ENCODE measurements at regions of chr6 and their contacts with region 1.

Region 1: DNA sequence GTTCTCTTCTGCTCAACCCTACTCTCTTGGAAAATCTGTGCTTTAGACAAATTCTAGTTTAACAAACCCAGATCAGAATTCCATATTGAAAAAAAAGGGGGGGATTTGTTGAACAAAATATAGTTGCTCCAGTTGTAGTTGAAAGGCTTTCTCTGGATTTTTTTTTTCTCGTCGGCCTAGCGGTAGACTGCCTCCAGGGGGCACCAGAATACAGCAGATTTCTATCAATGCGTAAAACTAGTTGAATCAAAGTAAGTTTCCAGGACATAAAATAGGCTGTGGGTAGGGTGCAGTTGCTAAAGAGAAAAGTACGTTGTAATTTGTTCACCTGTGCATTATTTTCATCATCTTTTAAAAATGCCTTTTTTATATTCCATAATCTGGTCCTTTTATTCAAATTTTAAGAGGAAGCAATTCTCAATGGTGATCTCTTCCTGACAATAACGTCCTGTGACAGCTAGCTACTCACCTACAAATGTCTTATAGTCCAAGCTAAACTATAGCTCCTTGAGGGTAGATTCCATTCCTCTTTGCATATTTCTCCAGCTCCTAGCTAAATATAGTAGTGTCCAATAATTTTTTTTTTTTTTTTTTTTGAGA is 105.4 kb downstream of the PERP start:
- DNase-seq: peak; percentile 53 to 63 (median 55)
- H3K4me3 ChIP-seq: no peak overlapping the region
- H3K4me3 Mint-ChIP-seq: no peak overlapping the region
- H3K27ac ChIP-seq: no peak overlapping the region
- H3K27ac Mint-ChIP-seq: no peak overlapping the region
- H3K4me1 ChIP-seq: no peaks in the 10 kb centered on the region
- H3K4me1 Mint-ChIP-seq: peaks cover 0 to 3% (median 0%) of the 10 kb centered on the region in 4 donors
- H3K27me3 ChIP-seq: no peaks in the 10 kb centered on the region
- H3K27me3 Mint-ChIP-seq: peaks cover 0 to 9% of the 10 kb centered on the region in 2 donors

Region 2: DNA sequence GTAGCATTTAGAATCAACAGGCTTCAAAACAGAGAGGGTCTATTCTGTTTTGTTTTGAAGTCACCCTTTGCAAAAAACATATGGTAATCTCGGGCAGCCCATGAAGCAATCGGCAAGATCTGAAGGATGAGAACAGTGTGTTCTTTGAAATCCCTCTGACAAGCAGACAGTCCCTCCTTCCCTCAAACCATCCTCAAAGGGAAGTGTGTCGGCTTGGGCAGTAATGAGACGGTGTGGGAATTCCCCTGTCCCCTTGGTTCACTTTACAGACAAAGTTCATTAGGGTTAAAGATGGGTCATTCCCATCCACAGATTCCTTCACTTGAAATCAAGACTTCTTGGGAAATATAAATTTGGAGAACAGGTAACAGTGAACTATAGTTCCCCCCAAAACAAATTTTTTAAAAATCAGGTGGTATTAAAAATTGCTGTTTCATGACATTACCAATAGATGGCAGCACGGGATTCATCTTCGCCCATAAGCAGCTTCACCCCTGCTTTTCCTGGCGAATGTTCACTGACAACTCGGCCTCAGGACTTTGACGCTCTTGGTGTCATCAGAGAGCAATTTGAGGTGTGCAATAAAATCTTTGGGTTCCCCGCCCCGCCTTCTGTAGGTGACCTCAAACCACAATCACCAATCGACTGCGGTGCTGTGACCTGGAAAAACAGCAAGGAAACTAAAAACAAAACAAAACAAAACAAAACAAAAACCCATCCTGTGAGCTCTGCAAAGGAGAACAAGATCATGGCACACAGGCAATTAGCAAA is 294.1 kb before region 1 on chr6:
- CTCF ChIA-PET with region 1: interaction called, 24 read pairs
- POLR2A ChIA-PET with region 1: no interaction called
- intact Hi-C with region 1: loop called (anchors 1 kb)
- DNase-seq: peak; percentile 91 to 97 (median 96)
- H3K4me3 ChIP-seq: peak overlapping the region in 1 of 2 donors; percentile 36
- H3K4me3 Mint-ChIP-seq: peak overlapping the region; percentile 58 to 80 (median 72)
- H3K27ac ChIP-seq: peak overlapping the region; percentile 77
- H3K27ac Mint-ChIP-seq: peak overlapping the region; percentile 93 to 99 (median 98)
- H3K4me1 ChIP-seq: peaks cover 68% of the 10 kb centered on the region
- H3K4me1 Mint-ChIP-seq: peaks cover 39 to 70% (median 57%) of the 10 kb centered on the region in 4 donors
- H3K27me3 ChIP-seq: no peaks in the 10 kb centered on the region
- H3K27me3 Mint-ChIP-seq: peaks cover 0 to under 1% of the 10 kb centered on the region in 2 donors

Region 3: DNA sequence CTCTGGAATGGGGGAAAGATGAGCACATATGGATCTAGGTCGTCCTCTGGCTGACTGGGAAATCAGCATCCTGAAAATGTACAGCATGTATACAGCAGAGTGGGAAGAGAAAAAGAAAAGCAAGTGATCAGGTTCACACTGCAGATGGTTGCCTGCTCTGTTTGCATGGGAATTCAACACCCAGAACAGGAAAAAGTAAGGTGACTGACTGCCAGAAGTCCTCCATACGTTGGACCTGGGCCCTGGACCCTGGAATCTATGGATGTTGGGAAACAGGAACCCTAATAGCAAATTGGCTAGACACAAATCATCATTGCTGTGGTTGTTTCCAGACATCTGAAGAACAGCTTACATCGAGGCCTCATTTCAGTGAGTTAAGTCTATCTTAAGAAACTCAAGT is 165.1 kb before region 1 on chr6:
- CTCF ChIA-PET with region 1: no interaction called
- POLR2A ChIA-PET with region 1: no interaction called
- intact Hi-C with region 1: no loop called
- DNase-seq: no peak
- H3K4me3 ChIP-seq: no peak overlapping the region
- H3K4me3 Mint-ChIP-seq: no peak overlapping the region
- H3K27ac ChIP-seq: no peak overlapping the region
- H3K27ac Mint-ChIP-seq: peak overlapping the region in 3 of 7 donors; percentile 3 to 54 (median 32)
- H3K4me1 ChIP-seq: no peaks in the 10 kb centered on the region
- H3K4me1 Mint-ChIP-seq: peaks cover 0 to 11% (median 5%) of the 10 kb centered on the region in 4 donors
- H3K27me3 ChIP-seq: no peaks in the 10 kb centered on the region
- H3K27me3 Mint-ChIP-seq: no peaks in the 10 kb centered on the region

Region 4: DNA sequence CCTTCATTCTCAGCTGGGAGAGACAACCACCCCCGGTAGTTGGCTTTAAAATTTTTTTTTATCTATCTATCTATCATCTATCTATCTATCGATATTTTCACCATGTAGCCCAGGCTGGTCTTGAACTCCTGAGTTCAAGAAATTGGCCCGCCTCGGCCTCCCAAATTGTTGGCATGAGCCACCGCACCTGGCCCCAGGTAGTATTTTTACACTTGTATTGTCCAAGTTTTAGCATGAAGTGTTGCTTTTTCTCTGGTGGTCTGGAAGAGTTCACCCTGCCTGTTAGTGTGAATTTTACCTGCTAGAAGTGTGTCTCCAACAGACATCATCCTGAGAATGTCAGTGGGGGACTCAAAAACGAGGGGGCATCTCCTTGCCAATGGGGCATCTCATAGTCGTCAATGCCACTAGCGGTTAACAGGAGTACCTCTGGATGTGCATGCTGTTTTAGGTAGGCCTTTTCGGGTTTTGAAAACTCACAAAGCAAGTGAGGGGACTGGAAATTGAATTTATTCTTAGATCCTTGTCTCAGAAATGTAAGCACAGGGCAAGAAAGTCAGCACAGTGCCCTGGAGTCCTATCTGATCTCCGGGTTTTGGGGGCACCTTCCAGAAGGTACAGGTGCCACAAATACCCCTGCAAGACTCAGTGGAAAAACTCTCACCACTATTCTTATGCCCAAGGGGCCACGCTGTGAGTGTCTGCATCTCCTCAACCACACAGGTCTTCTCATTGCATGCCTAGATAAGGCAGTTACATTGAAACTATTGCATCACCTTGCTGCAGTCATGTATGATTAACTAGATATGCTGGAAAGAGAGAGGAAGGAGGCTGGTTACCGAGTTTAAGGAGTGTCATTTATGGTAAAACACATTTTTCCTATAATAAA is 97.7 kb before region 1 on chr6:
- CTCF ChIA-PET with region 1: no interaction called
- POLR2A ChIA-PET with region 1: no interaction called
- intact Hi-C with region 1: no loop called
- DNase-seq: no peak
- H3K4me3 ChIP-seq: no peak overlapping the region
- H3K4me3 Mint-ChIP-seq: peak overlapping the region; percentile 13 to 85 (median 72)
- H3K27ac ChIP-seq: no peak overlapping the region
- H3K27ac Mint-ChIP-seq: peak overlapping the region in 2 of 7 donors; percentile 2 to 70
- H3K4me1 ChIP-seq: peaks cover 15% of the 10 kb centered on the region
- H3K4me1 Mint-ChIP-seq: peaks cover 12 to 33% (median 17%) of the 10 kb centered on the region in 4 donors
- H3K27me3 ChIP-seq: no peaks in the 10 kb centered on the region
- H3K27me3 Mint-ChIP-seq: no peaks in the 10 kb centered on the region

Region 5: GRCh38 chr6:137989664-137990063 is 12.2 kb before region 1 on chr6:
- CTCF ChIA-PET with region 1: interaction called, 12 read pairs
- POLR2A ChIA-PET with region 1: no interaction called
- intact Hi-C with region 1: no loop called
- DNase-seq: no peak
- H3K4me3 ChIP-seq: no peak overlapping the region
- H3K4me3 Mint-ChIP-seq: no peak overlapping the region
- H3K27ac ChIP-seq: no peak overlapping the region
- H3K27ac Mint-ChIP-seq: no peak overlapping the region
- H3K4me1 ChIP-seq: no peaks in the 10 kb centered on the region
- H3K4me1 Mint-ChIP-seq: no peaks in the 10 kb centered on the region
- H3K27me3 ChIP-seq: no peaks in the 10 kb centered on the region
- H3K27me3 Mint-ChIP-seq: peaks cover 5 to 10% of the 10 kb centered on the region in 2 donors

Region 6: DNA sequence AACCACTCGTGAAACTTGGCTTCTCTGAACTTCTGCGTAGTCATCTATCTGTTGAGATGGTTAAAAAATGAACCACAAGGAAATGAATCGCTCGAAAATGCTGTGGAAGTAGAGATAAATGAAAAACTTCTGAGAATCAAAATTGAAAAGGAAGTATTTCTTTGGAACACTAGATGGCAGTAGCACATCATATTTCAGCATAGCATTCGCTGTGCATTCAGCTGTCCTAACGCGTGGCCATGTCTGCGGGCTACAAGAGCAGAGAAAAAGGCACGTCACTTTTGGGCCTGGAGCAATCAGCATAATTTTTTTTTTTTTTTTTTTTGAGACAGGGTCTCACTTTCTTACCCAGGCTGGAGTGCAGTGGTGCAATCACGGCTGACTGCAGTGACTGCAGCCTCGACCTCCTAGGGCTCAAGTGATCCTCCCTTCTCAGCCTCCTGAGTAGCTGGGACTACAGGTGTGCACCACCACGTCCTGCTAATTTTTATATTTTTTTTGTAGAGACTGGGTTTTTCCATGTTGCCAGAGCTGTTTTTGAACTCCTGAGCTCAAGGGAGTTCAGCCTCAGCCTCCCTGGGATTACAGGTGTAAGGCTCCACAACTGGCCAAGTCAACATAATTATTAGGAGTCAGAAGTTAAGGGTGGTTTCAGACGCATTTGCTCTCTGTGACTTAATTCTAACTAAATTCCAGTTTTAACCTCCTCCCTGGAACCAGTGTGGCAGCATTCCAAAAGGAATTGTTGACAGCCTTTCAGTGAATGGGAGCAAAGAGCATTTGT is 114.2 kb after region 1 on chr6:
- CTCF ChIA-PET with region 1: interaction called, 79 read pairs
- POLR2A ChIA-PET with region 1: no interaction called
- intact Hi-C with region 1: no loop called
- DNase-seq: peak; percentile 53 to 64 (median 62)
- H3K4me3 ChIP-seq: no peak overlapping the region
- H3K4me3 Mint-ChIP-seq: peak overlapping the region in 1 of 8 donors; percentile 20
- H3K27ac ChIP-seq: no peak overlapping the region
- H3K27ac Mint-ChIP-seq: no peak overlapping the region
- H3K4me1 ChIP-seq: no peaks in the 10 kb centered on the region
- H3K4me1 Mint-ChIP-seq: peaks cover 3 to 5% (median 4%) of the 10 kb centered on the region in 4 donors
- H3K27me3 ChIP-seq: no peaks in the 10 kb centered on the region
- H3K27me3 Mint-ChIP-seq: peaks cover 20 to 21% of the 10 kb centered on the region in 2 donors

Region 7: GRCh38 chr6:138517635-138518034 is 515.8 kb after region 1 on chr6:
- CTCF ChIA-PET with region 1: interaction called, 3 read pairs
- POLR2A ChIA-PET with region 1: no interaction called
- intact Hi-C with region 1: loop called (anchors 2 kb)
- DNase-seq: peak; percentile 49 to 58 (median 51)
- H3K4me3 ChIP-seq: no peak overlapping the region
- H3K4me3 Mint-ChIP-seq: no peak overlapping the region
- H3K27ac ChIP-seq: no peak overlapping the region
- H3K27ac Mint-ChIP-seq: peak overlapping the region in 1 of 7 donors; percentile 29
- H3K4me1 ChIP-seq: peaks cover 5% of the 10 kb centered on the region
- H3K4me1 Mint-ChIP-seq: peaks cover 3 to 19% (median 10%) of the 10 kb centered on the region in 4 donors
- H3K27me3 ChIP-seq: no peaks in the 10 kb centered on the region
- H3K27me3 Mint-ChIP-seq: peaks cover 10% of the 10 kb centered on the region in 2 donors